ENCODE measurements at regions of chr15 and their contacts with region 1.

Region 1: GRCh38 chr15:38474155-38474757 is 20.3 kb downstream of the FAM98B start:
- DNase-seq: no peak
- H3K4me3 ChIP-seq: no peak overlapping the region
- H3K27ac ChIP-seq: no peak overlapping the region
- H3K4me1 ChIP-seq: no peaks in the 10 kb centered on the region
- H3K27me3 ChIP-seq: no peaks in the 10 kb centered on the region
- CTCF ChIP-seq: peak; percentile 42 to 65 (median 49)

Region 2: DNA sequence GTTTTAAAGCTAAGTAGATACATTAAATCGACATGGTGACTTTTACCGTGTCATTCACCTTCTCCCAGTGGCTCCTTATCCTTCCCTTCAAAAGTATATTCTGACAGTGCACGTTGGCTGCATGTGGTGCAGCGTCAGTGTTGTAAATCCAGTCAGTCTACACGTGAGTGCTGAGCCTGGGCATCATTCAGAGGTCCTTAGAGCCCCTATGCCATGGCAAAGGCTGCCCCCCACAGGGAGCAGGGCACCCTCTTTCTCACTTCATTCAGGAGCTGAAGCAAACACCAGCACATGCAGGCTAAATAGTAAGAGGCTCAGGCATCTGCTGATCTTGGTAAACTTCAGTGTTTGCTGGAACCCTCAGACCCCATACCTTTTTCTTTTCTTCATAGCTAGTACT is 47.1 kb after region 1 on chr15:
- intact Hi-C with region 1: no loop called
- DNase-seq: no peak
- H3K4me3 ChIP-seq: no peak overlapping the region
- H3K27ac ChIP-seq: no peak overlapping the region
- H3K4me1 ChIP-seq: no peaks in the 10 kb centered on the region
- H3K27me3 ChIP-seq: no peaks in the 10 kb centered on the region
- CTCF ChIP-seq: no peak

Region 3: DNA sequence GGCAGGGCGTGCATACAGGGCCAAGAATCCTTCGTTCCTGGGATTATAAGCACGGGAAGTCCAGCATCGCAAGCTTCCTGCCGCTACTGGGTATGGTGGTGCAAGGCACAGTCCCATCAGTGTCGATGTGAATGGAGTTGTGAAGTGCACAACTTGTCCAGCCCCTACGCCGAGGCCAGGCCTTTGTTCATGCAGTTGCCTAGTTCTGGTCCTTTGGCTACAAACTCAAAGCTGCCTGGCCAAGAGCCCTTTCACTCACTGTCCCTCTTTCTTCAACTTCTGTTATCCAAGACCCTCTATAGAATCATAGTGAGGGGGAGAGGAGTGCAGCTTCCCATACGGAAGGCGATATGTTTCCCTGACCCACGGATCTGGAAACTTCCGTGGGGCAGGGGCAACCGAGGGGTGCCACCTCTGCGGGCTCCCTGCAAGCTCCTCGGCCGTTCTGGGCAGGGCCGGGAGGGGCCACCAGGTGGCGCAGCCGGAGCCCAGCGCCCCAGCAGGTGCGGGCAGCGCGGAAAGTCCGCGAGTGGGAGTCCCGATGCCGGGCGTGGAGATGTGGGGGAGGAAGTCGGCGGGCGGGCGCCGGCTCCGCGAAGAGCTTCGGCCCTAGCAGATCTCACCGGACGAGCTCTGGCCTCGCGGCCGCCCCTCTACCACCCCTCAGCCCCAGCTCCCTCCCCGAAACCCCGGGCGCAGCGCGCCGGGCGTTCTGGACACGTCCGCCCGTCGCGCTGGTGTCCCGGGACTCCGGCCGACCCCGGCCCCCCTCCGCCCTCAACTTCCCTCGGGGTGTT is 89.7 kb after region 1 on chr15:
- intact Hi-C with region 1: loop called (anchors 10 kb)
- DNase-seq: peak; percentile 15 to 79
- H3K4me3 ChIP-seq: peak overlapping the region; percentile 60 to 72
- H3K27ac ChIP-seq: no peak overlapping the region
- H3K4me1 ChIP-seq: peaks cover 0 to 3% of the 10 kb centered on the region in 2 donors
- H3K27me3 ChIP-seq: no peaks in the 10 kb centered on the region
- CTCF ChIP-seq: peak; percentile 74 to 89 (median 79)

Region 4: GRCh38 chr15:38683382-38684242 is 209.4 kb after region 1 on chr15:
- intact Hi-C with region 1: loop called (anchors 5 kb)
- DNase-seq: no peak
- H3K4me3 ChIP-seq: no peak overlapping the region
- H3K27ac ChIP-seq: no peak overlapping the region
- H3K4me1 ChIP-seq: no peaks in the 10 kb centered on the region
- H3K27me3 ChIP-seq: no peaks in the 10 kb centered on the region
- CTCF ChIP-seq: peak; percentile 46 to 71 (median 53)

Measured in ascending aorta (tissue), 2 donors.